ENCODE measurements at regions of chr11 and their contacts with region 1.

Region 1: GRCh38 chr11:119334174-119334930 is at the start of gene RNF26:
- DNase-seq: peak; percentile 88
- H3K4me3 ChIP-seq: peak within 1 kb of the TSS; percentile 97
- CTCF ChIP-seq: no peak

Region 2: GRCh38 chr11:119095066-119095880 is 239.1 kb before region 1 on chr11:
- CTCF ChIA-PET with region 1: interaction called, 21 read pairs
- POLR2A ChIA-PET with region 1: interaction called, 12 read pairs
- DNase-seq: peak; percentile 97
- H3K4me3 ChIP-seq: peak overlapping the region; percentile 69
- CTCF ChIP-seq: no peak

Region 3: DNA sequence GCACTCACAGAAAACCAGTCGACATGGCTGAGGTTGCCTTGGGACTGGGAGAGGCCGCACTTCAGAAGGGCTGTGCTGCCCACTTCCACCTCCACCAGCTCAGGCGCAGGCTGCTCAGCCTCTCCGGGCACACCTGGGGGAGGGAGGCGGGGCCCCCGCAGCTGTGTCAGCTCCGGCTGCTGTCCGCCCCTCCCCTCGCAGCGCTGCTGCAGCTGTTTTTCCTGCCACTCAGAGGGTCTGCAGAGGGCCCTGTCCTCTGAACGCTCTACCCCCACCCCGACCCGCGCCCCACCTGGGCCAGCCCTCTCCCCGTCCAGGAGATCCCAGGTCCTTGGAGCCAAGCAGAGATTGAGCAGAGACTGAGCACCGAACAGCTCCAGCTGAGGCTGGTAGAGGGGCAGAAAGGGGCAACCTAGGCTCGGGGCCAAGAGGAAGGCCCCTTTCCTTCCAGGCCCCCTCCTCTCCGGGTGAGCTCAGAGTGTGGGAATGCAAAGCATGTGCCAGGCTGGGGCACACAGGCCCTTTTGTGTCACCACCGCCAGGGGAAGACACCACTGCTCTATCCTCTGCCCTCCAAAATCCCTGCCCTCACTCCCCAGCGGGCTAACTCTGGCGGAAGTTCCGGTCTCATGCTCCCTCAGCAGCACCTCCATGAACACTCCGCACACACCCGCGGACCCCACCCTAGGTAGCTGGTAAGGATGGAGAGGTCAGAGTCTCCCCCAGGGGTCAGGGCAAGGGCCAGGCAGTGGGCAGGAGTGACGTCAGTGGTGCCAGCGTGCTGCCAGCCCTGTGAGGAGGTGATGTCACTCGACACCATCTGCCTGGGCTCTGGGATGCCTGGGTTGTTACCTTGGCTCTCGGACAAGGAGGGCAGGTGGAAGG is 19.0 kb before region 1 on chr11:
- CTCF ChIA-PET with region 1: interaction called, 342 read pairs
- POLR2A ChIA-PET with region 1: interaction called, 6 read pairs
- DNase-seq: no peak
- H3K4me3 ChIP-seq: peak overlapping the region; percentile 73
- CTCF ChIP-seq: peak; percentile 30

Region 4: DNA sequence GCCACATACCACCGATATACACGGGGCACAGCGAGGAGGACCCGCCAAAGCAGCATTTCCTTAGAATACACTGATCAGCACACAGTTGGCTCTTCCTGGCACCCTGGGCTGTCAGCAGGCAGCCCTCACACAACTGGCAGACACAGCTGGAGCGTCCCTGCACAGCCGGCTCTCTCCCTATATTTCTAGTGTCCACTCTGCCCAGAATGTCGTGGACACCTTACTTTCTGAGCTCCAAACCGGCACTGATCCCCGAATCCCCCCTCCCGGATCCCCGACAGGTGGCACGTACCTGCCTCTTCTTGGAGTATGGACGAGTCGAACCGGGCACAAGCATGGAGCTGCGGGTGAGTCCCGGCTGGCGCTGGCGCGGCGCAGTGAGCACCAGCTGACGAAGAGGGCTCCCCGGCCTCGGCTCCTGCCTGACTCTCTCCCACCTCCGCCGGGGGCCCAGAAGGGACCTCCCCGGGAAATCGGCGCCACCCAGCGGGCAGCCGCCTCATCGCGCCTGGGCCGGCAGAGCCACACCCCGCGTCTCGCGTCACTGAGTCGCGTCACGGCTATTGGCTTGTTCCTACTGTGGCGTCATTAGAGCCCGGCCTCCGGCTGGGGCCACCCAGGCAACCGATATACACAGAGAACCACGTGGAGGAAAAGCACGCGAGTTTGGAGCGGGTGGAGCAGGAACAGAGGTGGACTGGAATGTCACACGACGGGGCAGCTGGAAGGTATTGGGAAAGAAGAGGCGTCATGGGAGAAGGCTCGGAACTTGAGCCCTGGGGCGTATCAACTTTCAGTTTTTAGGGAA is 47.0 kb after region 1 on chr11 and contains the start of gene USP2:
- CTCF ChIA-PET with region 1: interaction called, 358 read pairs
- POLR2A ChIA-PET with region 1: no interaction called
- DNase-seq: peak; percentile 63
- H3K4me3 ChIP-seq: peak within 1 kb of the TSS; percentile 64
- CTCF ChIP-seq: peak; percentile 96

Region 5: GRCh38 chr11:119468511-119468910 is 134.2 kb after region 1 on chr11:
- CTCF ChIA-PET with region 1: interaction called, 136 read pairs
- POLR2A ChIA-PET with region 1: interaction called, 5 read pairs
- DNase-seq: no peak
- H3K4me3 ChIP-seq: no peak overlapping the region
- CTCF ChIP-seq: no peak

Measured in AG04449 (cell line).